Dendritic cell treated with granulocyte-macrophage colony-stimulating factor and Interleukin-4, amounts not matched to agents 40 ng/mL and 50 ng/mL, for 4 days (primary cell): ENCODE measurements at regions of chr18 and their contacts with region 1.

Region 1: DNA sequence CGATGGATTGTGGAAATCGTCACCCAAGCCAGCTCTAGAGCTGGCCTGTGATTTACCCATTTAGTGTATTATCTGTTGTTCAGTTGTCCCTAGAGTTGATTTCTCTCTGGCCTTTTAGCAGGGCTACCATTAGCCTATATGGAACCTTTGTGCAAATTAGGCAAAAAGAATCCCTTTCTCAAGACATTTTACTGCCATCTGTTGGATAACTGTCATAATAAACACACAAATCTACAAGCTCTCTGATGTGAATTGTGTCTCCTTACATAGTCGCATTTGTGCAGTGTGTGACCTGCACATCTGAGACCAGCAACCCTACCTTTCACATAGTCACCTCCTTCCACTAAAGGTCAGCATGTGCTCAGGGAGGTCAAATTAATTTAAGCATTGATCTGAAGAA is 34.0 kb downstream of the LOXHD1 start:
- H3K4me3 Mint-ChIP-seq: no peak overlapping the region
- H3K27ac Mint-ChIP-seq: no peak overlapping the region
- H3K4me1 Mint-ChIP-seq: no peaks in the 10 kb centered on the region
- H3K27me3 Mint-ChIP-seq: no peaks in the 10 kb centered on the region

Region 2: GRCh38 chr18:46555724-46556123 is 67.3 kb before region 1 on chr18:
- intact Hi-C with region 1: loop called (anchors 1 kb)
- H3K4me3 Mint-ChIP-seq: no peak overlapping the region
- H3K27ac Mint-ChIP-seq: no peak overlapping the region
- H3K4me1 Mint-ChIP-seq: no peaks in the 10 kb centered on the region
- H3K27me3 Mint-ChIP-seq: no peaks in the 10 kb centered on the region